ENCODE measurements at regions of chr6 and their contacts with region 1.

Region 1: GRCh38 chr6:32761072-32761471 is 2.3 kb downstream of the HLA-DQB2 start:
- DNase-seq: no peak
- ATAC-seq: no peak

Region 2: GRCh38 chr6:32664827-32665362 is 96.2 kb before region 1 on chr6:
- intact Hi-C with region 1: loop called (anchors 2 kb)
- DNase-seq: peak; percentile 59
- ATAC-seq: peak; percentile 73